HEK293 (cell line): ENCODE measurements at regions of chr5 and their contacts with region 1.

Region 1: GRCh38 chr5:145697251-145697990 is 137.7 kb downstream of the PRELID2 start:
- H3K4me3 ChIP-seq: no peak overlapping the region
- H3K27ac ChIP-seq: no peak overlapping the region
- H3K4me1 ChIP-seq: no peaks in the 10 kb centered on the region
- CTCF ChIP-seq: no peak

Region 2: DNA sequence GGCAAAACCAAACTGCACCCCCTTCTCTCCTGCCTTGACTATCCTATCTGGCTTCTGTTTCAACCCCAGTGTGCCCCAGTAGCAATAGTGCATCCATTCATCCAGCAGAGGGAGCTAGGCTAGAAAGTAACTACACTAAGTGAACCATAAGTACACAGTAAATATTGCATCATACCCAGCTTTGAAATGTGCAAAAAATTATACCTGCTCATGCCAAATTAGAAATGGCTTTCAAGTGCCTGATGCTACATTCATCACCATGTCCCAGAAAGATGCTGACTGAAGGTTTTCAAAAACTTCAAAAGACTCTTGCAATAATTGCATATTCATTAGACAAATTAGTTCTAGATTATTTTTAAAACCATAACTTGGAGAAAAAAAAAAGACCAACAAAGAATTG is 15.7 kb before region 1 on chr5:
- CTCF ChIA-PET with region 1: interaction called, 11 read pairs
- POLR2A ChIA-PET with region 1: interaction called, 3 read pairs
- H3K4me3 ChIP-seq: no peak overlapping the region
- H3K27ac ChIP-seq: no peak overlapping the region
- H3K4me1 ChIP-seq: no peaks in the 10 kb centered on the region; the same call in 1 of the 2 replicates
- CTCF ChIP-seq: no peak

Region 3: GRCh38 chr5:145711417-145711816 is 14.0 kb after region 1 on chr5:
- CTCF ChIA-PET with region 1: interaction called, 16 read pairs
- POLR2A ChIA-PET with region 1: no interaction called
- H3K4me3 ChIP-seq: no peak overlapping the region
- H3K27ac ChIP-seq: no peak overlapping the region
- H3K4me1 ChIP-seq: no peaks in the 10 kb centered on the region
- CTCF ChIP-seq: no peak

Region 4: GRCh38 chr5:145739840-145740239 is 42.4 kb after region 1 on chr5:
- CTCF ChIA-PET with region 1: no interaction called
- POLR2A ChIA-PET with region 1: no interaction called
- H3K4me3 ChIP-seq: no peak overlapping the region
- H3K27ac ChIP-seq: no peak overlapping the region
- H3K4me1 ChIP-seq: no peaks in the 10 kb centered on the region
- CTCF ChIP-seq: no peak

Region 5: DNA sequence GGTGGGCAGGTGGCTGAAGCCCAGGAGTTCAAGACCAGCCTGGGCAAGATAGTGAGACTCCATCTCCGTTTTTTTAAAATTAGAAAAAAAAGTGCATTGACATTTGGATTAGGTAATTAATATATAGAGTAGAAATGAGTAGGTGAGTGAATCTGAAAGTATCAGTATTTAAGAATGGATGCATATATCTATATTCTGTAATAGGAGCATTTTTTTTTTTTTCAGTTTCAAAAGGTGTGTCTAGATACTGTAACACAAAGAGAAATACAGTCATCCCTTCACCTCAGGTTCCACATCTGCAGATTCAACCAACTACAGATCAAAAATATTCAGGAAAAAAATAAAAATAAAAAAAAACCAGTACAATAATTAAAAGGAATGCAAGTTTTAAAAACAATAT is 556.8 kb after region 1 on chr5:
- CTCF ChIA-PET with region 1: no interaction called
- POLR2A ChIA-PET with region 1: no interaction called
- H3K4me3 ChIP-seq: no peak overlapping the region
- H3K27ac ChIP-seq: no peak overlapping the region
- H3K4me1 ChIP-seq: no peaks in the 10 kb centered on the region
- CTCF ChIP-seq: no peak